H1 (cell line): ENCODE measurements at regions of chr15 and their contacts with region 1.

Region 1: GRCh38 chr15:75625542-75626347 is at the start of gene SNUPN:
- DNase-seq: peak; percentile 90 to 94
- H3K4me3 ChIP-seq: peak within 1 kb of the TSS; percentile 71 to 100 (median 93)
- H3K27ac ChIP-seq: peak within 1 kb of the TSS; percentile 89; the same call in 1 of the 2 replicates
- H3K4me1 ChIP-seq: peaks cover 0 to 3% (median 0%) of the 10 kb centered on the region in 4 experiments; a peak in 3 of 7 replicates
- H3K27me3 ChIP-seq: no peaks in the 10 kb centered on the region
- CTCF ChIP-seq: no peak
- EP300 ChIP-seq: no peak
- POLR2A ChIP-seq: no peak
- RAD21 ChIP-seq: no peak
- total RNA-seq, gene SNUPN: 26.2 and 28.2 TPM in 2 replicates

Region 2: GRCh38 chr15:75639709-75640482 is 14.2 kb after region 1 on chr15 and contains the start of gene IMP3:
- CTCF ChIA-PET with region 1: interaction called, 28 read pairs
- POLR2A ChIA-PET with region 1: interaction called, 73 read pairs
- DNase-seq: peak; percentile 89 to 92
- H3K4me3 ChIP-seq: peak within 1 kb of the TSS; percentile 82 to 99 (median 94)
- H3K27ac ChIP-seq: peak within 1 kb of the TSS; percentile 94
- H3K4me1 ChIP-seq: peaks cover 0 to 8% (median 6%) of the 10 kb centered on the region in 4 experiments; a peak in 5 of 7 replicates
- H3K27me3 ChIP-seq: no peaks in the 10 kb centered on the region
- CTCF ChIP-seq: no peak
- EP300 ChIP-seq: no peak
- POLR2A ChIP-seq: peak; percentile 92 to 97
- RAD21 ChIP-seq: no peak
- total RNA-seq, gene IMP3: 114 and 122 TPM in 2 replicates

Region 3: GRCh38 chr15:75647370-75648155 is 21.8 kb after region 1 on chr15 and contains the start of gene SNX33:
- CTCF ChIA-PET with region 1: interaction called, 5 read pairs
- POLR2A ChIA-PET with region 1: interaction called, 73 read pairs
- DNase-seq: peak; percentile 76 to 85
- H3K4me3 ChIP-seq: peak within 1 kb of the TSS; percentile 63 to 90 (median 72)
- H3K27ac ChIP-seq: peak within 1 kb of the TSS; percentile 82
- H3K4me1 ChIP-seq: peaks cover 9 to 29% (median 16%) of the 10 kb centered on the region in 4 experiments
- H3K27me3 ChIP-seq: peaks cover 0 to 14% (median 10%) of the 10 kb centered on the region in 4 experiments; a peak in 6 of 7 replicates
- CTCF ChIP-seq: peak; percentile 36 to 57 (median 44)
- EP300 ChIP-seq: no peak; a peak in 1 of 3 replicates
- POLR2A ChIP-seq: no peak; a peak in 1 of 3 replicates
- RAD21 ChIP-seq: peak; percentile 16 to 40; a peak in 3 of 4 replicates
- total RNA-seq, gene SNX33: 22.9 and 24.8 TPM in 2 replicates

Region 4: GRCh38 chr15:75694241-75695182 is 68.8 kb after region 1 on chr15:
- CTCF ChIA-PET with region 1: no interaction called
- POLR2A ChIA-PET with region 1: no interaction called
- DNase-seq: peak in 1 of 2 experiments; percentile 75
- H3K4me3 ChIP-seq: no peak overlapping the region
- H3K27ac ChIP-seq: no peak overlapping the region
- H3K4me1 ChIP-seq: peaks cover 8 to 22% (median 13%) of the 10 kb centered on the region in 4 experiments
- H3K27me3 ChIP-seq: no peaks in the 10 kb centered on the region
- CTCF ChIP-seq: peak; percentile 14 to 46 (median 26)
- EP300 ChIP-seq: no peak
- POLR2A ChIP-seq: no peak
- RAD21 ChIP-seq: peak in 1 of 2 experiments; percentile 35; a peak in 3 of 4 replicates

Region 5: DNA sequence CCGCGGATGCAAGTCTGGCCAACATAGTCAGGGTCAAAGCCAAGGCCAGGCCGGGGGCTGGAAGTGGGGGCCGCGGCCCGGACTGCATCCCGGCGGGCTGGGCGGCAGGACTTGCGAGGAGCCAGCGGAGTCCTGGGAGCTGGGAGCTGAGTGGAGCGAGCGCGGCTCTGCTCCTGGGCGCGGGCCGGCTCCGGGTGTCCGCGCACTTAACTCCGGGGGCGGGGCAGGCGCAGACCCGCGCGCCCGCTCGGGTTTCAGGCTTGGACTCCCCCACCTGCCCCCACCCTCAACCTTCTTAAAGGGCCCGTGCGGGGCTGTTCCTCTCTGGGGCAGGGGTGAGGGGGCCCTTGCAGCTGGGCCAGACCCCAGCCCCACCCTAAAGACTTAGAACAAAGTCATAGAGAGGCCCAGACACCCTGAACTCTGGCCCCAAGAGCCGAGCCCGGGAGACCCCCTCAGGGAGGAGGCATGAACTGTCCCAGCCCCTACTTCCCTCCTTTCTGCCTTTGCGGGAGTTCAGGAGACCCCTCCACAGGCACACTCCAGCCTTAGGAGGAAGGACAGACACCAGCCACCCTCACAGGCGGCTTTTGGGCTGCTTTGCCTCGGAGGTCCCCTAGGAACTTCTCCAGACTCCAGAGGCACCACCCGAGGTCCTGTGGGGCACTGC is 87.1 kb after region 1 on chr15 and contains the start of gene CSPG4:
- CTCF ChIA-PET with region 1: no interaction called
- POLR2A ChIA-PET with region 1: no interaction called
- DNase-seq: peak in 1 of 2 experiments; percentile 72
- H3K4me3 ChIP-seq: peak within 1 kb of the TSS; percentile 52 to 65 (median 56)
- H3K27ac ChIP-seq: no peak within 1 kb of the TSS
- H3K4me1 ChIP-seq: peaks cover 0 to 11% (median 10%) of the 10 kb centered on the region in 4 experiments; a peak in 6 of 7 replicates
- H3K27me3 ChIP-seq: peaks cover 0 to 21% (median 6%) of the 10 kb centered on the region in 4 experiments; a peak in 3 of 7 replicates
- CTCF ChIP-seq: no peak
- EP300 ChIP-seq: no peak
- POLR2A ChIP-seq: no peak
- RAD21 ChIP-seq: no peak
- total RNA-seq, gene CSPG4: 3.0 and 3.2 TPM in 2 replicates